Cardiac septum (tissue), 1 donor: ENCODE measurements at regions of chr19 and their contacts with region 1.

Region 1: DNA sequence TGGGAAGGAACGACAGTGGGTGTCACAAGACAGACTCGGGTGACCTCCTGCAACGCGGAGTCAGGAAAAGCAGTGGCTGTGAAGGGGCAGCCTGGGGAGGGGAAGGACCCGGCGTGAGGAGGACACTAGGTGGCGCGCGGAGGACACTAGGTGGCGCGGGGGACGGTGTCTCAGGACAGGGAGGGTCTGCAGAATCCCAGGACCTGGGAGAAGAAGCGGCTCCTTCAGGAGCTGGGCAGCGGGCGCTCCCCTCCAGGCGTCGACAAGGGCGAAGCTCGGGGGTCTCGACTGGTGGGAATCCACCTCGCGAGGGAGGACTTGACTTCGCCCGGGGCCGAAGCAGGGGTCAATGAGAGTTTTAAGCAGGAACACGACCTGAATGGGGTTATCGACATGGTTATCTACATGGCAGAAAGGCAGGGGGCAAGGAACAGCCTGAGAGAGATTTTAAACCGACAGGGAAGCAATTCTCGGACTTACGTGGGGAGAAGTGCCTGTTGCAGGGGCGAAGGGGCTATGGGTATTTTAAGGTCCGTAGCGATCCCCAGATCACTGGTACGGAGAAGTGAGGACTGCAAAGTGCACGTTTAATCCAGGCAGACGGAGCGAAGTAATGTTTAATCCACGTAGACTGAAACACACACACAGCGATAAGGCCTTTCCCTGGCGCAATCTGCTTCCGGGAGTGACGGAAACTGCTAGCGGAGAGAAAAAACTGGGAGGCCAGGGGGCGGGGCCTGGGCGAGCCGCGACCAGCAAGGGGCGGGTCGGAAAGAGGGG is at the start of gene ZNF616:
- DNase-seq: peak; percentile 99
- total RNA-seq, gene ZNF616: 4.3 TPM

Region 2: GRCh38 chr19:52115526-52116053 is 23.9 kb before region 1 on chr19:
- intact Hi-C with region 1: no loop called
- DNase-seq: no peak

Region 3: GRCh38 chr19:52171321-52172169 is 32.1 kb after region 1 on chr19 and contains the start of gene ZNF836:
- intact Hi-C with region 1: loop called (anchors 5 kb)
- DNase-seq: peak; percentile 96
- total RNA-seq, gene ZNF836: 5.9 TPM

Region 4: GRCh38 chr19:52189735-52190486 is 50.5 kb after region 1 on chr19 and contains the start of gene PPP2R1A:
- intact Hi-C with region 1: loop called (anchors 1 kb)
- DNase-seq: peak; percentile 100
- total RNA-seq, gene PPP2R1A: 466 TPM

Region 5: GRCh38 chr19:52237771-52238400 is 98.4 kb after region 1 on chr19:
- intact Hi-C with region 1: loop called (anchors 1 kb)
- DNase-seq: no peak